HepG2 (cell line): ENCODE measurements at regions of chr12 and their contacts with region 1.

Region 1: GRCh38 chr12:43776498-43776897 is 17.7 kb downstream of the IRAK4 start:
- DNase-seq: peak; percentile 44
- ATAC-seq: peak; percentile 89
- H3K4me3 ChIP-seq: no peak overlapping the region
- H3K27ac ChIP-seq: no peak overlapping the region
- H3K4me1 ChIP-seq: no peaks in the 10 kb centered on the region
- H3K27me3 ChIP-seq: no peaks in the 10 kb centered on the region
- CTCF ChIP-seq: peak; percentile 61
- EP300 ChIP-seq: no peak
- POLR2A ChIP-seq: no peak
- RAD21 ChIP-seq: no peak

Region 2: GRCh38 chr12:43805860-43806736 is 29.6 kb after region 1 on chr12 and contains the start of gene TWF1:
- CTCF ChIA-PET with region 1: no interaction called
- POLR2A ChIA-PET with region 1: interaction called, 4 read pairs
- in situ Hi-C with region 1: no loop called
- intact Hi-C with region 1: loop called (anchors 2 kb)
- DNase-seq: peak; percentile 62
- ATAC-seq: peak; percentile 97
- H3K4me3 ChIP-seq: peak within 1 kb of the TSS; percentile 97 to 100 (median 98)
- H3K27ac ChIP-seq: peak within 1 kb of the TSS; percentile 96
- H3K4me1 ChIP-seq: peaks cover 26% of the 10 kb centered on the region
- H3K27me3 ChIP-seq: no peaks in the 10 kb centered on the region
- CTCF ChIP-seq: no peak; the same call in 1 of the 2 replicates
- EP300 ChIP-seq: no peak
- POLR2A ChIP-seq: peak; percentile 67 to 81
- RAD21 ChIP-seq: peak; percentile 62
- total RNA-seq, gene TWF1: 85.5 and 148 TPM in 2 replicates

Region 3: GRCh38 chr12:44015335-44015941 is 238.9 kb after region 1 on chr12:
- CTCF ChIA-PET with region 1: no interaction called
- POLR2A ChIA-PET with region 1: no interaction called
- in situ Hi-C with region 1: no loop called
- intact Hi-C with region 1: no loop called
- DNase-seq: peak; percentile 43
- ATAC-seq: peak; percentile 44; the same call in 2 of the 3 replicates
- H3K4me3 ChIP-seq: no peak overlapping the region
- H3K27ac ChIP-seq: no peak overlapping the region
- H3K4me1 ChIP-seq: no peaks in the 10 kb centered on the region
- H3K27me3 ChIP-seq: no peaks in the 10 kb centered on the region
- CTCF ChIP-seq: peak; percentile 62
- EP300 ChIP-seq: no peak
- POLR2A ChIP-seq: no peak
- RAD21 ChIP-seq: 0 out of 2 replicates have a peak, but pooled peaks have one; percentile 25

Region 4: GRCh38 chr12:44052554-44052953 is 276.1 kb after region 1 on chr12:
- CTCF ChIA-PET with region 1: no interaction called
- POLR2A ChIA-PET with region 1: no interaction called
- in situ Hi-C with region 1: no loop called
- intact Hi-C with region 1: no loop called
- DNase-seq: no peak
- ATAC-seq: peak; percentile 59; the same call in 2 of the 3 replicates
- H3K4me3 ChIP-seq: no peak overlapping the region
- H3K27ac ChIP-seq: no peak overlapping the region
- H3K4me1 ChIP-seq: 0 out of 2 replicates have a peak, but pooled peaks cover 7% of the 10 kb centered on the region
- H3K27me3 ChIP-seq: no peaks in the 10 kb centered on the region
- CTCF ChIP-seq: no peak
- EP300 ChIP-seq: no peak
- POLR2A ChIP-seq: no peak
- RAD21 ChIP-seq: no peak

Region 5: GRCh38 chr12:44143175-44143574 is 366.7 kb after region 1 on chr12:
- CTCF ChIA-PET with region 1: no interaction called
- POLR2A ChIA-PET with region 1: no interaction called
- in situ Hi-C with region 1: no loop called
- intact Hi-C with region 1: no loop called
- DNase-seq: no peak
- ATAC-seq: no peak
- H3K4me3 ChIP-seq: no peak overlapping the region
- H3K27ac ChIP-seq: no peak overlapping the region
- H3K4me1 ChIP-seq: no peaks in the 10 kb centered on the region
- H3K27me3 ChIP-seq: no peaks in the 10 kb centered on the region
- CTCF ChIP-seq: no peak
- EP300 ChIP-seq: no peak
- POLR2A ChIP-seq: no peak
- RAD21 ChIP-seq: no peak

Region 6: DNA sequence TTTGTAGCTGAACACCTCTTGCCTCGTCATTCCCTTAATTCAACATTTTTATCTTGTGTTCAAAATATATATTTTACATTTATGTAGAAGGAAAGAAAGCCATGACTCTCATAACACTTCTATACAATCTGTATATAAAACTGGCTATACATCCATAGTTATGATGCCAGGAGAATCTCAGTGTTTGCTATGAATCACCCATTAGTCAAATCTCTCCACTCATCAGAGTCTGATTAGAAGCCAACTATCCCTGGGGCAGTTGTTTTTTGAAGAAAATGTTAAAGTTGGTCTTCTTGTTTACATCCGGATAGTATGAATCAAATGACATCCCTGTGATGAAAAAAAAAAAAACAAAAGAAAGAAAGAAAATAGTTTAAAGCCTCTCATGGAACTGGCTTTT is 595.8 kb after region 1 on chr12:
- CTCF ChIA-PET with region 1: no interaction called
- POLR2A ChIA-PET with region 1: no interaction called
- in situ Hi-C with region 1: no loop called
- intact Hi-C with region 1: no loop called
- DNase-seq: no peak
- ATAC-seq: no peak
- H3K4me3 ChIP-seq: no peak overlapping the region
- H3K27ac ChIP-seq: no peak overlapping the region
- H3K4me1 ChIP-seq: peaks cover 1% of the 10 kb centered on the region; the same call in 1 of the 2 replicates
- H3K27me3 ChIP-seq: no peaks in the 10 kb centered on the region
- CTCF ChIP-seq: no peak
- EP300 ChIP-seq: no peak
- POLR2A ChIP-seq: no peak
- RAD21 ChIP-seq: no peak